ENCODE measurements at regions of chr4 and their contacts with region 1.

Region 1: GRCh38 chr4:184263910-184264732 is 46.4 kb upstream of the ENPP6 start:
- DNase-seq: peak; percentile 90 to 94
- ATAC-seq: peak; percentile 74 to 89 (median 86)
- H3K4me3 ChIP-seq: peak overlapping the region in 2 of 10 donors; percentile 20 to 27
- H3K27ac ChIP-seq: no peak overlapping the region
- H3K4me1 ChIP-seq: peaks cover 0 to 46% (median 7%) of the 10 kb centered on the region in 9 donors
- H3K27me3 ChIP-seq: no peaks in the 10 kb centered on the region
- CTCF ChIP-seq: peak; percentile 88 to 93 (median 91)

Region 2: GRCh38 chr4:184453365-184454160 is 189.4 kb after region 1 on chr4:
- intact Hi-C with region 1: no loop called
- DNase-seq: peak in 1 of 2 donors; percentile 28
- ATAC-seq: peak in 5 of 8 donors; percentile 36 to 62 (median 53)
- H3K4me3 ChIP-seq: no peak overlapping the region
- H3K27ac ChIP-seq: peak overlapping the region in 6 of 10 donors; percentile 8 to 84 (median 49)
- H3K4me1 ChIP-seq: peaks cover 5 to 93% (median 84%) of the 10 kb centered on the region in 9 donors
- H3K27me3 ChIP-seq: no peaks in the 10 kb centered on the region
- CTCF ChIP-seq: no peak

Region 3: GRCh38 chr4:184544788-184545409 is 280.8 kb after region 1 on chr4:
- intact Hi-C with region 1: loop called in 1 of 10 experiments (anchors 5 kb)
- DNase-seq: no peak
- ATAC-seq: peak in 4 of 8 donors; percentile 21 to 39 (median 36)
- H3K4me3 ChIP-seq: no peak overlapping the region
- H3K27ac ChIP-seq: no peak overlapping the region
- H3K4me1 ChIP-seq: peaks cover 0 to 5% (median 0%) of the 10 kb centered on the region in 9 donors
- H3K27me3 ChIP-seq: no peaks in the 10 kb centered on the region
- CTCF ChIP-seq: no peak

Region 4: GRCh38 chr4:184649026-184649970 is 385.2 kb after region 1 on chr4 and contains the starts of genes CASP3 and PRIMPOL:
- intact Hi-C with region 1: loop called in 5 of 10 experiments (anchors 5 to 10 kb)
- DNase-seq: peak; percentile 97 to 99
- ATAC-seq: peak; percentile 92 to 98 (median 96)
- H3K4me3 ChIP-seq: peak within 1 kb of the TSS; percentile 72 to 96 (median 84)
- H3K27ac ChIP-seq: peak within 1 kb of the TSS; percentile 87 to 100 (median 98)
- H3K4me1 ChIP-seq: peaks cover 13 to 60% (median 50%) of the 10 kb centered on the region in 9 donors
- H3K27me3 ChIP-seq: no peaks in the 10 kb centered on the region
- CTCF ChIP-seq: peak in 8 of 9 donors; percentile 10 to 59 (median 38)
- total RNA-seq, gene CASP3: 7.9 to 24.8 (median 13.5) TPM
- total RNA-seq, gene PRIMPOL: 7.2 to 13.7 (median 10.8) TPM